ENCODE measurements at regions of chr7 and their contacts with region 1.

Region 1: GRCh38 chr7:107387128-107387527 is 82.7 kb upstream of the GPR22 start:
- DNase-seq: peak in 2 of 4 experiments; percentile 41 to 67
- ATAC-seq: peak; percentile 92
- H3K4me3 ChIP-seq: no peak overlapping the region
- H3K27ac ChIP-seq: peak overlapping the region; percentile 59; the same call in 1 of the 3 replicates
- H3K4me1 ChIP-seq: peaks cover 5 to 17% of the 10 kb centered on the region in 2 experiments
- H3K27me3 ChIP-seq: no peaks in the 10 kb centered on the region
- CTCF ChIP-seq: 0 out of 6 replicates have a peak, but pooled peaks of 1 of the 3 experiments have one; percentile 23
- EP300 ChIP-seq: no peak
- POLR2A ChIP-seq: no peak
- RAD21 ChIP-seq: no peak

Region 2: GRCh38 chr7:107208024-107208521 is 179.1 kb before region 1 on chr7:
- CTCF ChIA-PET with region 1: no interaction called
- POLR2A ChIA-PET with region 1: no interaction called
- in situ Hi-C with region 1: no loop called
- intact Hi-C with region 1: loop called (anchors 5 kb)
- DNase-seq: no peak
- ATAC-seq: no peak
- H3K4me3 ChIP-seq: no peak overlapping the region
- H3K27ac ChIP-seq: no peak overlapping the region
- H3K4me1 ChIP-seq: peaks cover 4 to 9% of the 10 kb centered on the region in 2 experiments; a peak in 2 of 5 replicates
- H3K27me3 ChIP-seq: no peaks in the 10 kb centered on the region
- CTCF ChIP-seq: no peak
- EP300 ChIP-seq: no peak
- POLR2A ChIP-seq: no peak
- RAD21 ChIP-seq: no peak

Region 3: DNA sequence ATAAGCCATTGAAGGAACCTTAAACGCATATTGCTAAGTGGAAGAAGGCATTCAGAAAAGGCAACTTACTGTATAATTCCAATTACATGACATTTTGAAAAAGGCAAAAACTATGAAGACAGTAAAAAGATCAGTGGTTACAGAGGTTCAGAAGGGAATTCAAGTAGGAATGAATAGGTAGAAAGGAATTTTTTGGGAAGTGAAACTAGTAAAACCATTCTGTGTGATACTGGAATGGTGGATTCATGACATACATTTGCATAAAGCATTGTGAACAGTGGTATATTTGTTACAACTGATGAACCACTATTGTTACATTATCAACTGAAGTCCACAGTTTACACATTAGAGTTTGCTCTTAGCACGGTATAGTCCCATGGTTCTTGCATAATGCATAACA is 31.5 kb before region 1 on chr7:
- CTCF ChIA-PET with region 1: no interaction called
- POLR2A ChIA-PET with region 1: no interaction called
- in situ Hi-C with region 1: no loop called
- intact Hi-C with region 1: no loop called
- DNase-seq: no peak
- ATAC-seq: no peak
- H3K4me3 ChIP-seq: no peak overlapping the region
- H3K27ac ChIP-seq: no peak overlapping the region
- H3K4me1 ChIP-seq: no peaks in the 10 kb centered on the region
- H3K27me3 ChIP-seq: no peaks in the 10 kb centered on the region
- CTCF ChIP-seq: no peak
- EP300 ChIP-seq: no peak
- POLR2A ChIP-seq: no peak
- RAD21 ChIP-seq: no peak

Region 4: DNA sequence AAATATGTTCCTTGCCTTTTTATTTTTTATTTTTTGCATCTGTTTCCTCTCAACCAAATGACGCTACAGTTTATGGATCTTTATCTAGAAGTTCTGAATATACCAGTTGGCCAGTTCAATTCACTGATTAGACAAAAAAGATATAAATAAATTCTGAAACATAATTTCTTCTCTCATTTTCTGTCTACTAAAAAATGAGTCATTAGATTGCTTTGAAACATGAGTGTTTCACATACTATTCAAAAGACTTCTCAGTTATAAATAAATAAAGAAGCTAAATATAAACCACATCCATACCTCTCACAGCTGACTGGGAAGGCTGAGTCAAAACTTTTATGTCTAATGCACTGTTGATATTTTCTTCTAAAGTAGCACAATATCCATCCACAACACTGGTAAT is 14.8 kb before region 1 on chr7:
- CTCF ChIA-PET with region 1: no interaction called
- POLR2A ChIA-PET with region 1: interaction called, 12 read pairs
- in situ Hi-C with region 1: no loop called
- intact Hi-C with region 1: no loop called
- DNase-seq: no peak
- ATAC-seq: no peak
- H3K4me3 ChIP-seq: no peak overlapping the region
- H3K27ac ChIP-seq: no peak overlapping the region
- H3K4me1 ChIP-seq: no peaks in the 10 kb centered on the region
- H3K27me3 ChIP-seq: no peaks in the 10 kb centered on the region
- CTCF ChIP-seq: no peak
- EP300 ChIP-seq: no peak
- POLR2A ChIP-seq: no peak
- RAD21 ChIP-seq: no peak

Measured in K562 (cell line).